Activated B cell treated with CpG ODN at 0.5 μM for 24 hours (primary cell): ENCODE measurements at regions of chr18 and their contacts with region 1.

Region 1: DNA sequence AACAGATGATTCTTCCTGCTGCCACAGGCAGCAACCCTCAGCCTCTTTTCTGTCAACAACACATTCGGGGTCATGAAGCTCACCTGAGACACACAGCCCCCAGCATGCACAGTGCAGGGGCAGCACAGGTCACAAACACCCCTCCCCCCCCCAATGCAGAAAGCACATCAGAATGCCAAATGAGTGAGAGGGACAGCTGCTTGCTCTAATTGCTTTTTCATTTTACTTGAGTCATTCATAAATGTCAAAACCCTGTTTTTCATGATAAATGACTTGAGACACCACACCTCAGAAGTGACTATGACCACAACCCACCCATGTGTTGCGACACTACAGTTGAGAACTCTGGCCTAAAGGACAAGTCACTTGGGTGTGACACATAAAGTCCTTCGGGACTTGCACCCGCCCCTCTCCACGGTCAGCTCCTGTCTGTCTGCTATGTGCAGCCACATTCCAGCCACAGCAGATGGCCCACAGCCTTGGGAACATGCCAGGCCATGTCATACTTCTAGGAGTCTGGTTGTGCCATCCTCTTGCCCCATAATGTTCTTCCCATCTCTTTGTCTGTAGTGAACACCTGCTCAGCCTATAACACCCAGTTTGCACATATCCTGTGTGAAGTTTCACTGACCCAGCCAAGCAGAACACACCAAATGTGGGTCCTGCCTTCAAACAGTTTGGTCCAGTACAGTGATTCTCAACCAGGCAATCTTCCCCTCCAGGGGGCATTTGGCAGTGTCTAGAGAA is 30.2 kb upstream of the RIOK3 start:
- DNase-seq: peak; percentile 22
- ATAC-seq: peak; percentile 82
- H3K4me3 Mint-ChIP-seq: peak overlapping the region; percentile 25
- H3K27ac Mint-ChIP-seq: peak overlapping the region; percentile 73
- H3K4me1 Mint-ChIP-seq: peaks cover 34% of the 10 kb centered on the region
- H3K27me3 Mint-ChIP-seq: no peaks in the 10 kb centered on the region
- CTCF ChIP-seq: no peak

Region 2: GRCh38 chr18:22703883-22704585 is 718.8 kb before region 1 on chr18:
- CTCF ChIA-PET with region 1: no interaction called
- POLR2A ChIA-PET with region 1: no interaction called
- intact Hi-C with region 1: no loop called
- DNase-seq: no peak
- ATAC-seq: no peak
- H3K4me3 Mint-ChIP-seq: no peak overlapping the region
- H3K27ac Mint-ChIP-seq: no peak overlapping the region
- H3K4me1 Mint-ChIP-seq: no peaks in the 10 kb centered on the region
- H3K27me3 Mint-ChIP-seq: peaks cover 6% of the 10 kb centered on the region
- CTCF ChIP-seq: no peak

Region 3: GRCh38 chr18:23437357-23438045 is 14.7 kb after region 1 on chr18:
- CTCF ChIA-PET with region 1: no interaction called
- POLR2A ChIA-PET with region 1: no interaction called
- intact Hi-C with region 1: loop called (anchors 2 kb)
- DNase-seq: peak; percentile 76
- ATAC-seq: peak; percentile 99
- H3K4me3 Mint-ChIP-seq: peak overlapping the region; percentile 93
- H3K27ac Mint-ChIP-seq: peak overlapping the region; percentile 68
- H3K4me1 Mint-ChIP-seq: peaks cover 14% of the 10 kb centered on the region
- H3K27me3 Mint-ChIP-seq: no peaks in the 10 kb centered on the region
- CTCF ChIP-seq: no peak